Activated naive CD4-positive, alpha-beta T cell treated with anti-CD3 and anti-CD28 coated beads for 36 hours (primary cell): ENCODE measurements at regions of chr1 and their contacts with region 1.

Region 1: GRCh38 chr1:221839796-221840395 is 98.0 kb upstream of the DUSP10 start:
- DNase-seq: peak; percentile 87
- H3K4me3 Mint-ChIP-seq: no peak overlapping the region
- H3K27ac Mint-ChIP-seq: peak overlapping the region; percentile 9
- H3K4me1 Mint-ChIP-seq: peaks cover 35% of the 10 kb centered on the region
- H3K27me3 Mint-ChIP-seq: peaks cover 5% of the 10 kb centered on the region

Region 2: DNA sequence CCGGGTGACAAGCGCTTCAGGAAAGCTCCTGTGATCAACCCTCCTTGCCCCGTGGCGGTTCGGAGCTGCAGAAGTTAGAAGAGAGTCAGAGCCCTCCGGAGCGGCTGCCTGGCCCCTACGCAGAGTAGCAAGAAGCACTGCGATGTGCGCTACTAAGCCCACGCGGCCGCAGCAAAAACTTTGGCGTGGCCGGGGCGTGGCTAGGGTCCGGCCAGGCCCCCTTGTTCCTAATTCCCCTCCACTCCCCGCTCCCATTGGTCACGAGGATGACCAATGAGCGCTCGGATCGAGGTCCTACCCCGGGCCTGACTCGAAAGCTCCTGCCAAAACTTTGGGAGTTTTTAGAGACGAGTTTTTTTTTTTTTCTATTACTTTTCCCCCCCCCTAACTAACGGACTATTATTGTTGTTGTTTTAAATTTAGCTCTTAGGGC is 960.8 kb before region 1 on chr1 and contains the start of gene HLX:
- CTCF ChIA-PET with region 1: no interaction called
- intact Hi-C with region 1: loop called (anchors 10 kb)
- DNase-seq: peak; percentile 31
- H3K4me3 Mint-ChIP-seq: peak within 1 kb of the TSS; percentile 63
- H3K27ac Mint-ChIP-seq: no peak within 1 kb of the TSS
- H3K4me1 Mint-ChIP-seq: peaks cover 37% of the 10 kb centered on the region
- H3K27me3 Mint-ChIP-seq: peaks cover 73% of the 10 kb centered on the region
- total RNA-seq, gene HLX: 0.12 TPM in 1 of 2 experiments, not detected in the other

Region 3: GRCh38 chr1:221478050-221478949 is 361.6 kb before region 1 on chr1:
- CTCF ChIA-PET with region 1: no interaction called
- intact Hi-C with region 1: loop called (anchors 1 kb)
- DNase-seq: peak; percentile 74
- H3K4me3 Mint-ChIP-seq: no peak overlapping the region
- H3K27ac Mint-ChIP-seq: no peak overlapping the region
- H3K4me1 Mint-ChIP-seq: peaks cover 2% of the 10 kb centered on the region
- H3K27me3 Mint-ChIP-seq: peaks cover 5% of the 10 kb centered on the region

Region 4: DNA sequence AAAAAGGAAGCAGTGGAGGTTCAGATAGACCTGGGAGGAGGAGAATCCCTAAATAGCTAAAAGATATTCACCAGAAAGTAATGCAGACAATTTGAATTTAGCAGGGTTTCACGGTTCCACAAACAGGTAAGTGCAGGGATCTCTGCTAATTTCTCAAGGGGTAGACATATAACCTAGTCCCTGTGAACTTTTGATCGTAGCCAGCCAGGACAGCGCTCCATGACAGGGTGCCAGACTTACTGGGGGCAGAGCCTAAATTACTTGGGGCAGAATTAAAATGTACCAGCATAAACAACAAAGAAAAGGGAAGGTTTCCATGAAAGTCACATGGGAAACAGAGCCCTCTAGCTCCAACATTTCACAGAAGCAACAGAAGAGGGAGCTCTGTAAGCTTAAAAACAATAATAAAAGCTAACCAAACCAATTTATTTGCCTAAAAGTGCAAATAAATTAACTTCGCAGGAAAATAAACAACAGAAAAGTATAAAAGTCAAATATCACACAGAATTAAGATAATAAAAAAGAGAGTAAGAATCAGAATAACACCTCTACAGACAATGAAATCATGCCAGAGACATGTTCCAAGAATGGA is 296.3 kb before region 1 on chr1:
- CTCF ChIA-PET with region 1: no interaction called
- intact Hi-C with region 1: loop called (anchors 10 kb)
- DNase-seq: no peak
- H3K4me3 Mint-ChIP-seq: no peak overlapping the region
- H3K27ac Mint-ChIP-seq: no peak overlapping the region
- H3K4me1 Mint-ChIP-seq: no peaks in the 10 kb centered on the region
- H3K27me3 Mint-ChIP-seq: peaks cover 8% of the 10 kb centered on the region

Region 5: DNA sequence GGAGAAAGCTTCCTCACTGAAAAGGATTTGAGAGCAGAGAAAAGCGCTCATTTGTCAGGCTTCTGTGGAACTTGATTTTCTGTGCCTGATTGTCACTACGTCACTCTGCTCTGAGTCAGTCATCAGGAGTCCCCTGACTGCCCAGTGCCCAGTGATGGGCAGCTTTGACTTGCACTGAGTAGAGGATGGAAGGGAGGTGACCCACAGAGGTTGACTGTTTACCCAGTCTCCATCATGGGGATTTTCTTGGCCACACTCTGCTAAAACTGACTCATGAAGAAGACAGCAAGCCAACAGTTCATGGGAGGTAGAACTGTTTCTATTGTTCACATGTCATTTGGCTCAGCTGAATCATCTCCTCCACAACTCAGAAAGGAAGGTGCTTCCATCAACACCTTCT is 15.9 kb before region 1 on chr1:
- CTCF ChIA-PET with region 1: no interaction called
- intact Hi-C with region 1: loop called (anchors 1 kb)
- DNase-seq: peak; percentile 51
- H3K4me3 Mint-ChIP-seq: no peak overlapping the region
- H3K27ac Mint-ChIP-seq: peak overlapping the region; percentile 27
- H3K4me1 Mint-ChIP-seq: peaks cover 47% of the 10 kb centered on the region
- H3K27me3 Mint-ChIP-seq: peaks cover 4% of the 10 kb centered on the region

Region 6: DNA sequence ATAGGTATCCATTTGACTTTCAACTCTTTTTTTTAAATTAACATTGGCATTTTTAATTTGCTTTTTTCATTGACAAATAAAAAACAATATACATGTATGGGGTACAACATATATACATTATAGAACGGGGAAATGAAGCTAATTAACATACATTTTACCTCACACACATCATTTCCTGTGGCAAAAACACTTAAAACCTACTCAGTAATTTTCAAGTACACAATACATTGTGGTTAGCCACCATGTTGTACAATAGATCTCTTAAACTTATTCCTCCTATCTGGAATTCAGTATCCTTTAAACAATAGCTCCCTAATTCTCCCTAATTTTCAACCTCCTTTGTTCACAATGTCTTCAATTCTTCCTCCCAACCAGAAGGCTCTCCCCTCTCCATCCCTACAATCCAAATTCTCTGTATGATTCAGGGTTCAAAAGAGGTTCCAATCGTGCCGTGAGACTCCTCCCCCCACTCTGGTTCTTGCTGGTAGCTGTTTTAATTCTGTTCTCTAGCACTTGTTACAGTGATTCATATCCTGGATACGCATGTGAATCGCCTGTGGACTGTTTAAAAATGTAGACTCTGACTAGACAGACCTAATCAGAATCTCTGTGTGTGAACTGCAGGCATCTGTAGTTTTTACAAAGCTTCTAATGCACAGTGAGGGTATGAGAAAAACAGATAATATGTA is 10.4 kb before region 1 on chr1:
- CTCF ChIA-PET with region 1: no interaction called
- intact Hi-C with region 1: loop called (anchors 1 kb)
- DNase-seq: peak; percentile 83
- H3K4me3 Mint-ChIP-seq: peak overlapping the region; percentile 14
- H3K27ac Mint-ChIP-seq: peak overlapping the region; percentile 83
- H3K4me1 Mint-ChIP-seq: peaks cover 45% of the 10 kb centered on the region
- H3K27me3 Mint-ChIP-seq: no peaks in the 10 kb centered on the region

Region 7: DNA sequence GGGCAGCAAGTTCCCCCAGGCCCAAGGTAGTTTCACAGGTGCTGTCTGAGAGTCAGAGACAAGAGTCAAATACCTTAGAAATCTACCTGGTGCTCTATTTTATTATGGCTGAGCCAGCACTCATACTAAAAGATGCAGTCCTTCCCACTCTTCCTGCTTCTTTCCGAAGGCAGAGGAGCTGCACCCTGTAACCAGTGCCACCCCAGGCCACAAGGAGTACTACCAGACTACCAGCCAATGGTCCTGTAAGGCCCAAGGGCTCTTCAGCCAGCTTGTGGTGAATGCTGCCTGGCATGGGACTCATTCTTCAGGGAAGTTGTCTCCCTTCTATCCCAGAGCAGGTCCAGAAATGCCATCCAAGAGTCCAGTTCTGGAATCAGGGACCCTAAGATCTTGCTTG is 105.8 kb after region 1 on chr1:
- CTCF ChIA-PET with region 1: no interaction called
- intact Hi-C with region 1: no loop called
- DNase-seq: no peak
- H3K4me3 Mint-ChIP-seq: no peak overlapping the region
- H3K27ac Mint-ChIP-seq: no peak overlapping the region
- H3K4me1 Mint-ChIP-seq: no peaks in the 10 kb centered on the region
- H3K27me3 Mint-ChIP-seq: no peaks in the 10 kb centered on the region